Activated CD4-positive, alpha-beta memory T cell treated with anti-CD3 and anti-CD28 coated beads for 36 hours (primary cell): ENCODE measurements at regions of chr5 and their contacts with region 1.

Region 1: DNA sequence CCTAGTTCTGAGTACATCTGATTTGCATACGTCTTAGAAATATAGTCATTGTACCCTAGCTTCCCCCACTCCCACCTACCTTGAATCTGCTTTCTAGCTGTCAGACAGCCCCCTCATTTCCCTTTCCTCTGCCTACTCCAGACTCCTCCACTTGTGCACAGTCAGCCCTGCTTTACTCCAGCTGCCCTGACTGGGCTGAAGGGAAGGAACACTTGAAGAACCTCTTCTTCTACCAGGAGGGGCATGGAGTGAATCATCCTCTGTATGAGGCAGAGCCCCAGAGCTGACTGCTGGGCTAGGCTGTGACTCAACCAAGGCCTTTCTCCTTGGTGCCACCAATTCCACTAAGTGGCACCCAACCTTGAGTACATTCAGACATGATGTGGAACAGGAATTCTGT is 18.1 kb upstream of the ZFR start:
- DNase-seq: peak; percentile 80
- H3K4me3 Mint-ChIP-seq: no peak overlapping the region
- H3K27ac Mint-ChIP-seq: peak overlapping the region; percentile 73
- H3K4me1 Mint-ChIP-seq: peaks cover 17% of the 10 kb centered on the region
- H3K27me3 Mint-ChIP-seq: no peaks in the 10 kb centered on the region

Region 2: GRCh38 chr5:32531885-32532520 is 69.4 kb after region 1 on chr5:
- CTCF ChIA-PET with region 1: no interaction called
- POLR2A ChIA-PET with region 1: interaction called, 4 read pairs
- intact Hi-C with region 1: loop called (anchors 1 kb)
- DNase-seq: peak; percentile 81
- H3K4me3 Mint-ChIP-seq: peak overlapping the region; percentile 91
- H3K27ac Mint-ChIP-seq: peak overlapping the region; percentile 99
- H3K4me1 Mint-ChIP-seq: peaks cover 56% of the 10 kb centered on the region
- H3K27me3 Mint-ChIP-seq: no peaks in the 10 kb centered on the region